Endothelial cell of umbilical vein (primary cell): ENCODE measurements at regions of chr2 and their contacts with region 1.

Region 1: GRCh38 chr2:183248866-183249567 is 124.8 kb downstream of the NUP35 start:
- DNase-seq: peak; percentile 71
- H3K4me3 ChIP-seq: no peak overlapping the region
- H3K27ac ChIP-seq: no peak overlapping the region
- H3K4me1 ChIP-seq: no peaks in the 10 kb centered on the region
- H3K27me3 ChIP-seq: no peaks in the 10 kb centered on the region
- CTCF ChIP-seq: peak in 1 of 2 donors; percentile 29
- POLR2A ChIP-seq: no peak

Region 2: GRCh38 chr2:183259921-183260320 is 10.9 kb after region 1 on chr2:
- CTCF ChIA-PET with region 1: interaction called, 27 read pairs
- POLR2A ChIA-PET with region 1: no interaction called
- dilution Hi-C with region 1: no loop called
- intact Hi-C with region 1: no loop called
- DNase-seq: no peak
- H3K4me3 ChIP-seq: no peak overlapping the region
- H3K27ac ChIP-seq: no peak overlapping the region
- H3K4me1 ChIP-seq: no peaks in the 10 kb centered on the region
- H3K27me3 ChIP-seq: no peaks in the 10 kb centered on the region
- CTCF ChIP-seq: no peak
- POLR2A ChIP-seq: no peak

Region 3: GRCh38 chr2:183292028-183292427 is 43.0 kb after region 1 on chr2:
- CTCF ChIA-PET with region 1: interaction called, 23 read pairs
- POLR2A ChIA-PET with region 1: no interaction called
- dilution Hi-C with region 1: no loop called
- intact Hi-C with region 1: no loop called
- DNase-seq: peak; percentile 55
- H3K4me3 ChIP-seq: no peak overlapping the region
- H3K27ac ChIP-seq: no peak overlapping the region
- H3K4me1 ChIP-seq: peaks cover 5% of the 10 kb centered on the region
- H3K27me3 ChIP-seq: no peaks in the 10 kb centered on the region
- CTCF ChIP-seq: no peak
- POLR2A ChIP-seq: no peak

Region 4: GRCh38 chr2:183348492-183348891 is 99.5 kb after region 1 on chr2:
- CTCF ChIA-PET with region 1: interaction called, 18 read pairs
- POLR2A ChIA-PET with region 1: no interaction called
- dilution Hi-C with region 1: no loop called
- intact Hi-C with region 1: no loop called
- DNase-seq: no peak
- H3K4me3 ChIP-seq: no peak overlapping the region
- H3K27ac ChIP-seq: no peak overlapping the region
- H3K4me1 ChIP-seq: no peaks in the 10 kb centered on the region
- H3K27me3 ChIP-seq: no peaks in the 10 kb centered on the region
- CTCF ChIP-seq: no peak
- POLR2A ChIP-seq: no peak

Region 5: DNA sequence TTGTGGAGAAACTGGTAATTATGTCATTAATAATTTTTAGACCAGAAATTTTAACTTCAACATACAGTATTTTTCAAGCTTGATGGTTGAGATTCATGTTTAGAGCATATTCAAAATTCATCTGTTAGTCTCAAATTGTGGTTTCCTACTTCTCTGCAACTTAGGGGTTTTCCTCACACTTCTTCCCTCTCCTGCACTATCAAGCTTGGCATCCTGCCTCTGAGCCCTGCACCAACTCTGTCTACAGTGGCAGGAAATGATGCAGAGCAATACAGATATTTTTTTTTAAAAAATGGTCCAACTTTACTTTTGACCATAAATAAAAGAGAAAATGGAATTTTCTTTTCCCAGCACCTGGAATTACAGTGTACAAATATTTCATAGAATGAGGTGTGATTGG is 122.5 kb after region 1 on chr2:
- CTCF ChIA-PET with region 1: interaction called, 11 read pairs
- POLR2A ChIA-PET with region 1: no interaction called
- dilution Hi-C with region 1: no loop called
- intact Hi-C with region 1: no loop called
- DNase-seq: peak; percentile 26
- H3K4me3 ChIP-seq: no peak overlapping the region
- H3K27ac ChIP-seq: no peak overlapping the region
- H3K4me1 ChIP-seq: no peaks in the 10 kb centered on the region
- H3K27me3 ChIP-seq: no peaks in the 10 kb centered on the region
- CTCF ChIP-seq: no peak
- POLR2A ChIP-seq: no peak

Region 6: DNA sequence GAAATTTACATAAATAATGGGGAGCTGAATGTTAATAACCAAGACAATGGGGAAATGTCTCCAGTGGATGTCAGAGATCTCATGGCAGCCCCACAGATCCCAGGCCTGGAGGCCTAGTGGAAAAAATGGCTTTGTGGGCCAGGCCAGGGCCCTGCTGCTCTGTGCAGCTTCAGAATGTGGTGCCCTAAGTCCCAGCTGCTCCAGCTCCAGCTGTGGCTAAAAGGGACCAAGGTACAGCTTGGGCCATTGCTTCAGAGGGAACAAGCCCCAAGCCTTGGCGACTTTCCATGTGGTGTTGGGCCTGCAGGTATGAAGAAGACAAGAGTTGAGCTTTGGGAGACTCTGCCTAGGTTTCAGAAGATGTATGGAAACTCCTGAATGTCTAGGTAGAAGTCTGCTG is 533.4 kb after region 1 on chr2:
- CTCF ChIA-PET with region 1: no interaction called
- POLR2A ChIA-PET with region 1: no interaction called
- dilution Hi-C with region 1: no loop called
- intact Hi-C with region 1: no loop called
- DNase-seq: no peak
- H3K4me3 ChIP-seq: no peak overlapping the region
- H3K27ac ChIP-seq: no peak overlapping the region
- H3K4me1 ChIP-seq: no peaks in the 10 kb centered on the region
- H3K27me3 ChIP-seq: no peaks in the 10 kb centered on the region
- CTCF ChIP-seq: no peak
- POLR2A ChIP-seq: no peak

Region 7: DNA sequence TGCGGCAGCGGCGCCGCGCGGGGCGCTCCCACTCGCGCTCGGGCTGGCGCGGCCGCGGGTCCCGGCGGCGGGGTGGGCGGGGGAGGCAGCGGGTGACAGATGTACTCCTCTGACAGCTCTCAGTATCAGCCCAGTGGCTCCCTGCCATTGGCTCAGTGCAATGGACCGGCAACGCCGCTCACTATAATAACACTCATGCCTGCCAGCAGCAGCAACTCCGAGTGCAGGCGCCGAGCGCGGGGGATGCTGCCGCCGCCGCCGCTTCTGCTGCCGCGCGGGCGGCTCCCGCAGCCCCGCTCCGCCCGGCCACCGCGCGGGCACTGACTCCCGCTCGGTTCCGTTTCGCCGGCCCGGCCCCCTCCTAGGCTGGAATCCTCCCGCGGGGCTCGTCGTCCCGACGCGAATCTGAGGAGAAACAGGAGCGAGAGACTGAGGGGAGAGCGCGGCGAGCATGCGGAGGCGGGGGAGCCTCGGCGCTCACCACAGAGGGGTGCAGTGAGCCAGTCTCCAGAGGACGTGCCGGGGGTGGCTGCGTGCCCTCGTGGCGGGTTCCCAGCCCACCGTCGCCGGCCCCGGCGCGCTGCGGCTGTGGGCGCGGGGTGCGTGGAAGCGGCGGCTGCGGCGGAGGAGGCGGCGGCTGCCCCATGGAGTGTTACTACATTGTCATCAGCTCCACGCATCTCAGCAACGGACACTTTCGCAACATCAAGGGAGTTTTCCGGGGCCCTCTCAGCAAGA is 1349.5 kb after region 1 on chr2 and contains the start of gene ZNF804A:
- CTCF ChIA-PET with region 1: interaction called, 10 read pairs
- POLR2A ChIA-PET with region 1: no interaction called
- dilution Hi-C with region 1: no loop called
- intact Hi-C with region 1: loop called (anchors 10 kb)
- DNase-seq: peak; percentile 61
- H3K4me3 ChIP-seq: peak within 1 kb of the TSS; percentile 58 to 75 (median 73)
- H3K27ac ChIP-seq: peak within 1 kb of the TSS; percentile 44
- H3K4me1 ChIP-seq: peaks cover 12% of the 10 kb centered on the region
- H3K27me3 ChIP-seq: peaks cover 12 to 34% of the 10 kb centered on the region in 2 experiments
- CTCF ChIP-seq: no peak
- POLR2A ChIP-seq: no peak
- total RNA-seq, gene ZNF804A: 0.90 TPM in 1 of 2 replicates, not detected in the other